ENCODE measurements at regions of chr17 and their contacts with region 1.

Region 1: GRCh38 chr17:63993368-63993985 is 4.7 kb upstream of the PRR29 start:
- DNase-seq: no peak
- ATAC-seq: no peak
- H3K4me3 ChIP-seq: no peak overlapping the region
- H3K27ac ChIP-seq: no peak overlapping the region
- H3K4me1 ChIP-seq: peaks cover 24% of the 10 kb centered on the region
- H3K27me3 ChIP-seq: peaks cover 24 to 64% of the 10 kb centered on the region in 2 experiments
- CTCF ChIP-seq: no peak
- EP300 ChIP-seq: no peak
- POLR2A ChIP-seq: no peak
- RAD21 ChIP-seq: no peak

Region 2: DNA sequence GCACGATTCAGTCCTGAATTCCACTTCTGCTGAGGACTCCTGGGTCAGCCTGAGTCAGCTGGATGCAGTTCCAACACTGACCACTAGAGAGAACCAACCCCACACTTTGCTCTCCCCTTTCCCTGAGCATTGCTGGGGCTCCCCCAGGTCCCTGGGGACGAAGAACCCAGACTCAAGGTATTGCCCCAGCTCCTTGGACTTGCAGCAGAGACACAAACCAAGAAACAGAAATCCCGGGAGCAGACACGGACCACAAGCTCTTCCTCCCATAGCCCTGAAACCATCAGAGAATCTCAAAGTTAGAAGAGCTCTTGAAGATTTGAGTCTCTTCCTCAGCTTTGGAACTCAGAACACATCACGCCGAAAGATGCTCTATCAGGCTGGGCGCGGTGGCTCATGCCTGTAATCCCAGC is 74.2 kb before region 1 on chr17:
- CTCF ChIA-PET with region 1: interaction called, 27 read pairs
- POLR2A ChIA-PET with region 1: no interaction called
- in situ Hi-C with region 1: no loop called
- intact Hi-C with region 1: loop called (anchors 5 kb)
- DNase-seq: peak; percentile 44
- ATAC-seq: peak; percentile 92
- H3K4me3 ChIP-seq: no peak overlapping the region
- H3K27ac ChIP-seq: no peak overlapping the region
- H3K4me1 ChIP-seq: peaks cover 16% of the 10 kb centered on the region
- H3K27me3 ChIP-seq: peaks cover under 1 to 24% of the 10 kb centered on the region in 2 experiments; a peak in 3 of 5 replicates
- CTCF ChIP-seq: peak; percentile 94
- EP300 ChIP-seq: no peak
- POLR2A ChIP-seq: no peak
- RAD21 ChIP-seq: peak; percentile 90